MCF 10A (cell line): ENCODE measurements at regions of chr1 and their contacts with region 1.

Region 1: DNA sequence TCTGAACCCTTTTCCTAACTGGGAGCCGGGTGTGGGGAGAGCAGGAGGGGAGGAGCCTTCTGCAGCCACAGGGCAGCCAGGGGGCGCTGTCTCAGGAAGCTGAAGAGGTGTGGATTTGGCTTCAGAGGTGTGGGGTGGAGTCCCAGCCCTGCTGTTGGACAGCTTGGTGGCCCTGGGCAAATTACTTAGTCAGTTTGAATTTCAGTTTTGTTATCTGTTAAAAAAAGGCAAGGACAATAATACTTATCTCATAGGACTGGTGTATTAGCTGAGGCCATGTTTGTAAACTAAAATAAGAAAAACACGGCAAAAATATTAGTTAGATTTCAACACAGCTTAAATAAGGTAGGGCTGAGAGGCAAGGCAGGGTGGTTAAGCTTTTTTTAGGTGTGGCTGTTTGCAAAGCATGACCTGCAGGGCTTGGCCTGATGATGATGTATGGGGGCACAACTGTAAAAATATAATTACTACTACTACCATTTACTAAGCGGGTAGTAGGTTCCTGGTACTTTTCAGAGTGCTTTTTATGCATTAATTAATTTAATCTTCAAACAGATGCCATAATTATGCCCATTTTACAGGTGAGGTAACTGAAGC is 111.8 kb downstream of the PLXNA2 start:
- DNase-seq: peak; percentile 96
- H3K4me3 Mint-ChIP-seq: peak overlapping the region; percentile 12
- H3K27ac Mint-ChIP-seq: peak overlapping the region; percentile 74
- H3K4me1 Mint-ChIP-seq: peaks cover 31% of the 10 kb centered on the region
- H3K27me3 Mint-ChIP-seq: no peaks in the 10 kb centered on the region
- CTCF ChIP-seq: peak; percentile 99

Region 2: GRCh38 chr1:208029381-208030287 is 102.8 kb before region 1 on chr1:
- CTCF ChIA-PET with region 1: interaction called, 15 read pairs
- POLR2A ChIA-PET with region 1: no interaction called
- intact Hi-C with region 1: loop called (anchors 5 kb)
- DNase-seq: peak; percentile 26
- H3K4me3 Mint-ChIP-seq: no peak overlapping the region
- H3K27ac Mint-ChIP-seq: peak overlapping the region; percentile 21
- H3K4me1 Mint-ChIP-seq: no peaks in the 10 kb centered on the region
- H3K27me3 Mint-ChIP-seq: no peaks in the 10 kb centered on the region
- CTCF ChIP-seq: no peak

Region 3: DNA sequence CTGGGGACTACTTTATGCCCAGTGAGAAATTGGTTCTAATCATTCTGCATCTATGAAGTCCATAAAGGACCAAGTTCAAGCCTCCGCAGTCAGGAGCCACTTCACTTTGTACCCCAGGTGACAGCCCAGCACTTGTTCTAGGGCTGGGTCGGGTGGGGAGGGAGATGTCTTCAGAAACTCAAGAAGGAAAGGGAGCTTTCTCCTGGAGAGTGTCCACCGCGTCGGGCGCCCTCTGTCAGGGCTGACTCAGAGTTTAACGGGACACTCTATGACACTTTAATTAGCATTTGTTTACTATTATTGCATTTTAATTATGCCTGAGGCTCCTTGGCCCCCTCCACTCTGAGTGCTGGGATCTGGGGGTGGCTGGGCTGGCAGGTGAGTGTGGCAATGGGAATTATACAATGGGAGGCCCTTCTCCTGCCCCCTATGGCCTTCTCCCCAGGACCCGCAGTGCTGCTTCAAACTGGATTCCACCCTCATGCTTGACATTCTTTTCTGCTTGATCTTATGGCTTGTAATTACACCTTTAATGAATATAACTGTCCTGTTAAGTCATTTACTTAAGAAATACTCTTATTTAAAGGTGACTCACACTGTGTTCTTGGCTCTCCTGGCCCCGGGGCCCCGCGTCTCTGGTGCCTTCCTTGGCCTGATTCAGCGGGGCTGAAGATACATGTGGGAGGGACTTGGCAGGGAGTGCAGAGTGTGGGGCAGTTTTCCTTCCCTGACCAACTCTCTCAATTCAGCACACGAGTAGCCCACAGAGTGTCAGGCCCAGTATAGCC is 24.8 kb before region 1 on chr1:
- CTCF ChIA-PET with region 1: interaction called, 89 read pairs
- POLR2A ChIA-PET with region 1: interaction called, 3 read pairs
- intact Hi-C with region 1: loop called (anchors 1 kb)
- DNase-seq: peak; percentile 100
- H3K4me3 Mint-ChIP-seq: peak overlapping the region; percentile 28
- H3K27ac Mint-ChIP-seq: peak overlapping the region; percentile 69
- H3K4me1 Mint-ChIP-seq: peaks cover 47% of the 10 kb centered on the region
- H3K27me3 Mint-ChIP-seq: no peaks in the 10 kb centered on the region
- CTCF ChIP-seq: no peak

Region 4: DNA sequence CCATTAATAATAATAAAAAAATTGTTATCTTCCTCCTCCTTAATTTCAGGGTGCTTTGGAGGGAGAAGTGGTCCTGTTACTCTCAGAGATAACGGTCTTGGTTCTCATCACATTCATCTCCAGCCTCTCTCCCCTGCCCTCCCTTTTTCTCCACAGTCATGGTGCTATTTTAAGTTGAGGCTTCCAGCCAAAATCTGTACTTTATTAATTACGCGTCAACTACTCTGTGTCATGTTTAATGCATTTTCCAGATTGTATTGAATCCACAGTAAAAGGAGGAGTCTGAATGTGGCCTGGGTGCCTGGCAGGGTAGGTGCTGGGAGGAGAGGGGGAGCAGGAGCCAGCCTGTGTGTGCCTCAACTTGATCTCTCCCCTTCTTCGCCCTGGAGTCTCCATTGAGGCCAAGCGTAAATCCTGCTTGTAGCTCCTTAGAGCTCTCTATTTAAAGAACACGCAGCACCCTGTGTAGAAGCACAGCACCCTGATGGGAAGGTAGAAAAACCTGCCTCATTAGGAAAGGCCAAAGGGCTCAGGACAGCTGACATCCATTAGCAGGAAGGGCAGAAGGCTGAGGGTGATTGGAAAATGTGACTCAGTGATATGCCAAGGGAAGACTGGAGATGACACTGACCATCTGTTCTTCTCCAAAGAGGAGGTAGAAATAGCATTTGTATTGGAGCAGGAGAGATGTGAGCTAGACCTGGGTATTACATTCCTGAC is 29.4 kb after region 1 on chr1:
- CTCF ChIA-PET with region 1: interaction called, 25 read pairs
- POLR2A ChIA-PET with region 1: interaction called, 8 read pairs
- intact Hi-C with region 1: no loop called
- DNase-seq: no peak
- H3K4me3 Mint-ChIP-seq: no peak overlapping the region
- H3K27ac Mint-ChIP-seq: no peak overlapping the region
- H3K4me1 Mint-ChIP-seq: peaks cover 41% of the 10 kb centered on the region
- H3K27me3 Mint-ChIP-seq: no peaks in the 10 kb centered on the region
- CTCF ChIP-seq: no peak

Region 5: DNA sequence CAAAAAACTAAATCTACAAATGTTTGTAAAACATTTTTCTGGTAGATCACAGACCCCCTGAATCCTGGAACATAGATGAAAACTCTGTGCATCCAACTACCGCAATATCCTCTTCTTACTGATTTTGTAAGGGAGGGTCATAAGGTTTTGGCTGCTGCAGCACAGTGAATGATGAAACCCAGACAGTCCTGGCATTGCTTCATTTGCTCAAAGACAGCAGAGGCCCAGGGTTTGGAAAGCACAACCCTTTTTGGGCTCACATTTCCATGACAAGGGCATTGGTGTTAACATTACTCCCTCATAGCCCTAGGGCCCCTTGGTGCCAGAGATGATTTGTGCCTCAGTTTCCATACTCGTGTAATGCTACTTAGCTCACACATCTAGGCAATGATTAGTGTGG is 60.6 kb after region 1 on chr1:
- CTCF ChIA-PET with region 1: interaction called, 15 read pairs
- POLR2A ChIA-PET with region 1: interaction called, 4 read pairs
- intact Hi-C with region 1: no loop called
- DNase-seq: peak; percentile 75
- H3K4me3 Mint-ChIP-seq: no peak overlapping the region
- H3K27ac Mint-ChIP-seq: no peak overlapping the region
- H3K4me1 Mint-ChIP-seq: peaks cover 30% of the 10 kb centered on the region
- H3K27me3 Mint-ChIP-seq: no peaks in the 10 kb centered on the region
- CTCF ChIP-seq: no peak

Region 6: DNA sequence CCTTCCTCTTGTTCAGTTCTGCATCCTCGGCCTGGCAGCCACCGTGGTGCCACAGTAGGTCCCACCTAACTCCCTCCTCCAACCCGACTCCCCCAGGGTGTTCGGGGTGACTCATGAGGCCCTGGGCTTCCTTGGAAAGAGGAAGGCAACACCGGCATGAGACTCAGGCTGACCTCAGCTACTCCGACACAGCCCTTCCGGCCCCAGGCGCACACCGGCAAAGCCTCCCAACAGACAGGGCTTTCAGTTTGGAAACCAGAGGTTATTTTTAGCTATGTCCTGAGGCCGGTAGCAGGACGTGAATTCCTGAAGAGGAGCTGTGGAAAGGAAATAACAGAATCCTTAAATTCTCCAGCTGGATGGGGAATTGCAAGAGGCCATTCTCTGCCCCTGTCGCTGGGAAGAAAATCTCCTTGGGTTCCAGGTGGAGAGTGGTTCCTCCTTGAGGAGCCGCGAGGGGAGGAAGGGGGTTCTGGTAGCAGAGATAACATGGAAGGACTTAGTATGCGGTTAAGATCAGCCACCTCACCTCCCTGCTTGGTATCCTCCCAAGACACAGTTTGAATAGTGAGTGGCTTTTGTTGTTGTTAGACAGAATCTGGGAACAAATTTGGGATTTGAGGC is 87.4 kb after region 1 on chr1:
- CTCF ChIA-PET with region 1: interaction called, 58 read pairs
- POLR2A ChIA-PET with region 1: interaction called, 9 read pairs
- intact Hi-C with region 1: loop called (anchors 1 kb)
- DNase-seq: peak; percentile 98
- H3K4me3 Mint-ChIP-seq: peak overlapping the region; percentile 57
- H3K27ac Mint-ChIP-seq: peak overlapping the region; percentile 97
- H3K4me1 Mint-ChIP-seq: peaks cover 60% of the 10 kb centered on the region
- H3K27me3 Mint-ChIP-seq: no peaks in the 10 kb centered on the region
- CTCF ChIP-seq: no peak

Region 7: DNA sequence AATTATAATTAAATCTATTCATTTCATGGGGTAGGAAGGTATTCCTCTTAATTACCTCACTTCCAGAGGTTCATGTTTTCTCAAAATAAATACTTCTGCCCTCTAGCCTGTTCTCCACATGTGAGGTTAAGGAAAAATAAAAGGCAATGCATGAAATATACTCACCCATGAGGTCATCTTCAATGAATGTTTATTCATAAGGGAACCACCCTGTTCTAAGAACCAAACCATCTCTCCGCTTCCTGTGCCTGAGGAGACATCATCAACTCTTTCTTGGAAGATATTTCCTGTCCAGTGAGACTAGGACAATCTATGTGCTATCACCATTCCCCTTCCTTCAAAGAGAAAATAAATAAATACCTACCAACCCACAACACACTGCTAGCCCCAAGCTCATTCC is 625.5 kb after region 1 on chr1:
- CTCF ChIA-PET with region 1: no interaction called
- POLR2A ChIA-PET with region 1: no interaction called
- intact Hi-C with region 1: no loop called
- DNase-seq: no peak
- H3K4me3 Mint-ChIP-seq: no peak overlapping the region
- H3K27ac Mint-ChIP-seq: no peak overlapping the region
- H3K4me1 Mint-ChIP-seq: peaks cover 17% of the 10 kb centered on the region
- H3K27me3 Mint-ChIP-seq: no peaks in the 10 kb centered on the region
- CTCF ChIP-seq: no peak